ENCODE measurements at regions of chr15 and their contacts with region 1.

Region 1: DNA sequence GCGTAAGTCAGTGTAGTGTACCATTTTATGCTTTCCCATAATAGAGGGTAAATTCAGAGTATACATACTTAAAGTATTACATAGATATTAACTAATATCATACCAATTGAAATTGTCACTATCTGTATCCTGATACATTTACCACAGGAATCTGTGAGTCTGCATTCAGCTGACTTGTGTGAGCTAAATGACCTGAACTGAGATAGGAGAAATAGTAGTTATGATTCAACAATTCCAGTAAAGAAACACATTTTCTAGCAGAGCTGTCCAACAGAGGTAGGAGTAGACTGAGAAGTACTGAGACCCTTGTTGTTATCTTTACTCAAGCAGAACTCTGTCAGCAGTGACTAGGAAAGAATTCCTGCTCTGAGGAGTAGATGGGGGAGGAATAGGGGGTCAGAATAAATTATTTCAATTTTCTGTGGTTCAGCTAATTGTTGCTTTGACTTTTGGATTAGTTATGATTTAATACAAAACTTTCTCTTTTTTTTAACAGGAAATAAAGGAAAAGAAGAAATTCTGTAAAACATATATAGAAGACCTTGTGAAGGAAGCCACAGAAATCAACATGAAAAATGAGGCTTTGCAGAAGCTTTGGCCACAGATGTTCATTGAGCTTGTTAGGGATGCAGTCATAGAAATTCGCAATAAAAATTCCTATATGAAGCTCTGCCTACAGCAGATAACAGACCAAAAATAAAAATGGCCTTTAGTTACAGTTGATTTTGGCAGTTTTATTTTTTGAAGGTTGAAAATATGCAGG is 66.2 kb upstream of the THSD4 start:
- DNase-seq: peak; percentile 87
- H3K4me3 ChIP-seq: no peak overlapping the region
- H3K27ac ChIP-seq: peak overlapping the region; percentile 96
- H3K4me1 ChIP-seq: peaks cover 63% of the 10 kb centered on the region
- H3K27me3 ChIP-seq: no peaks in the 10 kb centered on the region
- CTCF ChIP-seq: no peak

Region 2: GRCh38 chr15:70892002-70892914 is 156.8 kb before region 1 on chr15 and contains the starts of genes LRRC49 and THAP10:
- CTCF ChIA-PET with region 1: interaction called, 3 read pairs
- dilution Hi-C with region 1: no loop called
- in situ Hi-C with region 1: no loop called
- intact Hi-C with region 1: loop called (anchors 2 kb)
- DNase-seq: peak; percentile 97
- H3K4me3 ChIP-seq: peak within 1 kb of the TSS; percentile 80 to 88 (median 85)
- H3K27ac ChIP-seq: peak within 1 kb of the TSS; percentile 79
- H3K4me1 ChIP-seq: peaks cover 13% of the 10 kb centered on the region
- H3K27me3 ChIP-seq: no peaks in the 10 kb centered on the region
- CTCF ChIP-seq: peak in 1 of 2 donors; percentile 0
- total RNA-seq, gene LRRC49: 9.0 to 21.2 TPM
- total RNA-seq, gene THAP10: 3.0 to 4.9 TPM

Region 3: DNA sequence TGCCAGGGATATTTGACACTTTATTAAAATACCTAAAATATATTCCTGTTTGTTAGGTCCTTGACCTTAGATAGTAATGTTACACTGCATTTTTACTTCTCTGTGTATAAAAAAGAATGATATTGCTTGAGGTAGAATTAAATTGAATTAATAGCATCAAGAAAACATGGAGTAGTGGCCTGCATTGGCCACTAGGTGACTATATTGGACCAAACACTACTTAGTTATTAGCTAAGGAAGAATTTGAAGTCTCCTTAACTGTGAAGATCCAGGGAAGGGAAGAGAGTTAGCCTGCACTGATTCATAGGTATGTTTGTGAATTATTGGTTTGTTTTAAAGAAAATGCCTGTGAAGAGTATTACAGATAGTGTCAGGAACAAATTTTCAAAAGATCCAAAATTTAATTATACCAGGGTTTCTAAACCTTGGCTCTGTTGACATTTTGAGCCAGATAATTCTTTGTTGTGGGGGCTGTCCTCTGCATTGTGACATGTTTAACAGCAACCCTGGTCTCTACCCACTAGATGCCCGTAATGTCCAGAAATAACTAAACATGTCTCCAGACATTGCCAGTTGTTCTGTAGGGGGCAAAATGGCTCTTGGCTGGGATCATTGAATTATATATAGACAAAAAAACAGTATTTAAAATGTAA is 37.5 kb before region 1 on chr15:
- CTCF ChIA-PET with region 1: no interaction called
- dilution Hi-C with region 1: no loop called
- in situ Hi-C with region 1: no loop called
- intact Hi-C with region 1: loop called (anchors 2 kb)
- DNase-seq: peak; percentile 57
- H3K4me3 ChIP-seq: no peak overlapping the region
- H3K27ac ChIP-seq: peak overlapping the region; percentile 46
- H3K4me1 ChIP-seq: peaks cover 15% of the 10 kb centered on the region
- H3K27me3 ChIP-seq: no peaks in the 10 kb centered on the region
- CTCF ChIP-seq: peak; percentile 91 to 95

Region 4: GRCh38 chr15:71093121-71094024 is 44.3 kb after region 1 on chr15:
- CTCF ChIA-PET with region 1: no interaction called
- dilution Hi-C with region 1: no loop called
- in situ Hi-C with region 1: no loop called
- intact Hi-C with region 1: loop called (anchors 2 kb)
- DNase-seq: peak; percentile 93
- H3K4me3 ChIP-seq: no peak overlapping the region
- H3K27ac ChIP-seq: peak overlapping the region; percentile 72
- H3K4me1 ChIP-seq: peaks cover 38% of the 10 kb centered on the region
- H3K27me3 ChIP-seq: no peaks in the 10 kb centered on the region
- CTCF ChIP-seq: no peak

Region 5: GRCh38 chr15:71106802-71107501 is 57.9 kb after region 1 on chr15:
- CTCF ChIA-PET with region 1: no interaction called
- dilution Hi-C with region 1: no loop called
- in situ Hi-C with region 1: no loop called
- intact Hi-C with region 1: no loop called
- DNase-seq: peak; percentile 48
- H3K4me3 ChIP-seq: no peak overlapping the region
- H3K27ac ChIP-seq: no peak overlapping the region
- H3K4me1 ChIP-seq: peaks cover 34% of the 10 kb centered on the region
- H3K27me3 ChIP-seq: no peaks in the 10 kb centered on the region
- CTCF ChIP-seq: no peak